ENCODE measurements at regions of chr21 and their contacts with region 1.

Region 1: GRCh38 chr21:43684424-43684823 is 25.1 kb downstream of the RRP1B start:
- DNase-seq: no peak

Region 2: GRCh38 chr21:42636538-42636930 is 1047.9 kb before region 1 on chr21:
- intact Hi-C with region 1: no loop called
- DNase-seq: no peak

Region 3: GRCh38 chr21:43634618-43635017 is 49.8 kb before region 1 on chr21:
- intact Hi-C with region 1: no loop called
- DNase-seq: no peak

Region 4: DNA sequence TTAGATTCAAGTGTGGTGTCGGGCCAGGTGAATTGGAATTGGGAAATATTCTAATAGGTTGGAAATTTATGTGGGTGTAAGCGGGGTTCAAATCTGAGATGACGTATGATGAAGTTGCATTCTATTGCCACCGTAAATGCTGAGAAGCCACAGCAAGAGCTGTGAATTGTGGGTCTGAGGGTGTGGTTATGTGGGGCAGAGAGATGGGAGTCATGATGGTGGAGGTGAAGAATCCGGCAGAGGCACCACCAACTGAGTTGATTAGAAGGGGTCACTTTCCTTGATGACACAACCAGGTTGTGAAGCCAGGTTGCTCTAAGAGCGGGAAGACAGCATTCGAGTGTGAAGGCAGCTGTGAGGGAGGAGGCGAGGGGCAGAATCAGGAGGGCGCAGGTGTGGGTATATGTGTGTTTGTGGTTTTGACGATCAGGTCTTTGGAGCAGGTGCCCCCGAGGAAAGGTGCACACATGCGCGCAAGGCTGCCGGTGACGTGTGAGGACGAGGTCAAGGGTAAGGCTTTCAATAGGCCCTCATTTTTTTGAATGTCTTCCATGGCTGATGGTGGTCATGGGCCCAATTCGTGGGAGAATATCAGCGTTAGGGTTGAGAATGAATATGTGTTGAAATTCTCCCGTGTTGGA is 789.6 kb after region 1 on chr21:
- intact Hi-C with region 1: loop called (anchors 5 kb)
- DNase-seq: peak in 2 of 10 donors; percentile 18 to 52

Measured in posterior cingulate gyrus (tissue), 11 donors.